ENCODE measurements at regions of chr1 and their contacts with region 1.

Region 1: GRCh38 chr1:92713939-92714338 is 71.0 kb downstream of the EVI5 start:
- DNase-seq: no peak
- H3K4me3 ChIP-seq: no peak overlapping the region
- H3K27ac ChIP-seq: no peak overlapping the region
- H3K27me3 ChIP-seq: no peaks in the 10 kb centered on the region
- CTCF ChIP-seq: no peak

Region 2: DNA sequence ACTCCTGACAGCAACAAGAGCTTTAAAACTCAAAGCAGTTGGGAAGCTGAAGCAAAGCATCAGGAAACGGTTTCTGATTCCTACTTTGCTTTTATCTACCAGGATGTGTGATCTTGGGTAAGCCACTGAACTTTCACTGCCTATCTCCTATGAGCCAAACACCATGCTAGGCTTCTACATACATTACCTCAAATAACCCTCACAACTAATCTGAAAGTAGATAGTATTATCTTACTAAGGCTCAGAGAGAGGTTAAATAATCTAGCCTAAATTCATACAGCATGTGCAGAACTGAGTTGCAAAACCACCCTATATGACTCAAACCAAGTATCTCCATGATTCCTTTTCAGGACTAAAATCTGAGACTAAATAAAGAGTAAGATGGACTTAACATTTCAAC is 12.8 kb before region 1 on chr1:
- CTCF ChIA-PET with region 1: interaction called, 11 read pairs
- POLR2A ChIA-PET with region 1: interaction called, 4 read pairs
- DNase-seq: no peak
- H3K4me3 ChIP-seq: no peak overlapping the region
- H3K27ac ChIP-seq: no peak overlapping the region
- H3K27me3 ChIP-seq: no peaks in the 10 kb centered on the region
- CTCF ChIP-seq: no peak